ENCODE measurements at regions of chr2 and their contacts with region 1.

Region 1: GRCh38 chr2:218269899-218270720 is at the starts of genes AAMP and PNKD:
- DNase-seq: peak; percentile 100
- ATAC-seq: peak; percentile 94
- H3K4me3 Mint-ChIP-seq: peak within 1 kb of the TSS; percentile 96
- H3K27ac Mint-ChIP-seq: peak within 1 kb of the TSS; percentile 95
- H3K4me1 Mint-ChIP-seq: peaks cover 41% of the 10 kb centered on the region
- H3K27me3 Mint-ChIP-seq: no peaks in the 10 kb centered on the region
- total RNA-seq, gene AAMP: 52.6 to 56.2 TPM
- total RNA-seq, gene PNKD: 36.7 to 37.6 TPM

Region 2: GRCh38 chr2:218229239-218229638 is 40.9 kb before region 1 on chr2:
- CTCF ChIA-PET with region 1: interaction called, 16 read pairs
- POLR2A ChIA-PET with region 1: interaction called, 4 read pairs
- DNase-seq: peak; percentile 77
- ATAC-seq: peak; percentile 83
- H3K4me3 Mint-ChIP-seq: peak overlapping the region; percentile 58
- H3K27ac Mint-ChIP-seq: peak overlapping the region; percentile 88
- H3K4me1 Mint-ChIP-seq: peaks cover 80% of the 10 kb centered on the region
- H3K27me3 Mint-ChIP-seq: no peaks in the 10 kb centered on the region

Region 3: GRCh38 chr2:218286570-218287459 is 16.7 kb after region 1 on chr2:
- CTCF ChIA-PET with region 1: interaction called, 158 read pairs
- POLR2A ChIA-PET with region 1: interaction called, 23 read pairs
- DNase-seq: peak; percentile 90
- ATAC-seq: peak; percentile 77
- H3K4me3 Mint-ChIP-seq: peak overlapping the region; percentile 91
- H3K27ac Mint-ChIP-seq: peak overlapping the region; percentile 98
- H3K4me1 Mint-ChIP-seq: peaks cover 78% of the 10 kb centered on the region
- H3K27me3 Mint-ChIP-seq: no peaks in the 10 kb centered on the region

Region 4: DNA sequence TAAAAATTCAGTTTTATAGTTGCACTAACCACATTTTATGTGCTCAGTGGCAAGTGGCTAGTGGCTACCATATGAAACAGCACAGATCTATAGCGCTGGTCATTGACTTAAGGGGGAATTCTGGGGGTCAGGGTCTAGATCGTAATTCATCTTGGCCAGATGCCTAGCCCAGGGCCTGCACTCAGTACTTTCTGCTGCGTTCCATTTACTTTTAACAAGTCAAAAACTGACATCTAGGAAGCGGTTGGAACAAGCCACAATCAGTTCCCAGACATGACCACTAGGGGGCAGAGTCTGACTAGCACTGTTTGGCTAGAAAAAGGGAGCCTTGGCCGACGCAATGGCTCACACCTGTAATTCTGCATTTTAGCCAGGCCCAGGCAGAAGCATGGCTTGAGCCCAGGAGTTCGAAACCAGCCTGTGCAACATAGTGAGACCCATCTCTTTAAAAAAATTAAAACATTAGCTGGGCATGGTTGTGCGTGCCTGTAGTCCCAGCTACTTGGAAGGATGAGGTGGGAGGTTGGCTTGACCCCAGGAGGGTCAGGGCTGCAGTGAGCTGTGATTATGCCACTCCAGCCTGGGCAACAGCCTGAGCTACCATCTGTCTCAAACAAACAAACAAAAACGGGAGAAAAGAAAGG is 31.2 kb after region 1 on chr2:
- CTCF ChIA-PET with region 1: interaction called, 14 read pairs
- POLR2A ChIA-PET with region 1: interaction called, 4 read pairs
- DNase-seq: peak; percentile 95
- ATAC-seq: peak; percentile 88
- H3K4me3 Mint-ChIP-seq: no peak overlapping the region
- H3K27ac Mint-ChIP-seq: peak overlapping the region; percentile 46
- H3K4me1 Mint-ChIP-seq: peaks cover 7% of the 10 kb centered on the region
- H3K27me3 Mint-ChIP-seq: no peaks in the 10 kb centered on the region

Region 5: GRCh38 chr2:218395797-218396687 is 125.9 kb after region 1 on chr2:
- CTCF ChIA-PET with region 1: interaction called, 7 read pairs
- POLR2A ChIA-PET with region 1: interaction called, 15 read pairs
- DNase-seq: peak; percentile 96
- ATAC-seq: peak; percentile 66
- H3K4me3 Mint-ChIP-seq: peak overlapping the region; percentile 85
- H3K27ac Mint-ChIP-seq: peak overlapping the region; percentile 96
- H3K4me1 Mint-ChIP-seq: peaks cover 35% of the 10 kb centered on the region
- H3K27me3 Mint-ChIP-seq: no peaks in the 10 kb centered on the region